Caco-2 (cell line): ENCODE measurements at regions of chr20 and their contacts with region 1.

Region 1: DNA sequence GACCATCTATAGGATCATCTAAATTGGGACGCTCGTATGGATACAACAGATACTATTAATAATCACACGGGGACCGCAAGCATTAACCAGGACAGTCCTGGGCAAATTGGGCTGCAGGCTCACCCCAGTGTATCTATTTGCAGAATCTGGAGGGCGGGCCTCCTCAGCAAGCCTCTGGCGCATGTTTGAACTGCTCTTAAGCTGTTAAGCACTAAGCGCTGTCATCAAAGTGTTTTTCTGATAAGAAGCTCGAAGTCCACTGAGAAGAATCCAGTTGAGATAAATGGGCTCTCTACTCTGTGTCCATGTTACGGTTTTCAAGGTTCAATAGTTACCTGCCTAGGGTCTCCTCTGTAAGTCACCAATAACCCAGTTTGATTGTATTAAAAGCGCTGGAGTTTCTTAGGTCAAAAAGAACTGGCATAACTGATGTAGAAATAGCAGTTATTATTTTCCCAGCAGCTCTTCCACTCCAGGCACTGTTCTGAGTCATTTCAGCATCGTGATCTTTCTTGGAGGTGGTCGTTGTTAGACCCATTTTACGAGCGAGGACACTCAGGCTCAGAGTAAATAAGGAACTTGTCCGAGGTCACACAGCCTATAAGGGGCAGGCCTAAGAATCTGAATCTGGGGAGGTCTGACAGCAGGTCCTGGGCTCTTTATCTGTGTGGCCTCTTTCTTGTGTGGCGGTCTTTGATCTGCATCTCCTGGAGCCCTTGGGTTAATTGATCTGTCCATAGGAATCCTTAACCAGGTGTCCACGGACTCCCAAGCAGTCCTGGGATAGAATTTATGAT is 207.4 kb upstream of the ZNF217 start:
- DNase-seq: peak; percentile 97 to 99
- H3K4me3 ChIP-seq: peak overlapping the region; percentile 21
- H3K4me3 Mint-ChIP-seq: peak overlapping the region; percentile 74
- H3K27ac Mint-ChIP-seq: peak overlapping the region; percentile 95
- H3K4me1 ChIP-seq: peaks cover 54% of the 10 kb centered on the region
- H3K4me1 Mint-ChIP-seq: peaks cover 67% of the 10 kb centered on the region
- H3K27me3 ChIP-seq: no peaks in the 10 kb centered on the region
- H3K27me3 Mint-ChIP-seq: no peaks in the 10 kb centered on the region
- CTCF ChIP-seq: no peak

Region 2: GRCh38 chr20:53594068-53595017 is 206.7 kb before region 1 on chr20:
- CTCF ChIA-PET with region 1: interaction called, 4 read pairs
- POLR2A ChIA-PET with region 1: interaction called, 4 read pairs
- intact Hi-C with region 1: loop called (anchors 1 kb)
- DNase-seq: peak; percentile 99 to 100
- H3K4me3 ChIP-seq: peak overlapping the region; percentile 98
- H3K4me3 Mint-ChIP-seq: peak overlapping the region; percentile 87
- H3K27ac Mint-ChIP-seq: peak overlapping the region; percentile 80
- H3K4me1 ChIP-seq: peaks cover 38% of the 10 kb centered on the region
- H3K4me1 Mint-ChIP-seq: peaks cover 44% of the 10 kb centered on the region
- H3K27me3 ChIP-seq: no peaks in the 10 kb centered on the region
- H3K27me3 Mint-ChIP-seq: no peaks in the 10 kb centered on the region
- CTCF ChIP-seq: peak; percentile 64 to 79

Region 3: DNA sequence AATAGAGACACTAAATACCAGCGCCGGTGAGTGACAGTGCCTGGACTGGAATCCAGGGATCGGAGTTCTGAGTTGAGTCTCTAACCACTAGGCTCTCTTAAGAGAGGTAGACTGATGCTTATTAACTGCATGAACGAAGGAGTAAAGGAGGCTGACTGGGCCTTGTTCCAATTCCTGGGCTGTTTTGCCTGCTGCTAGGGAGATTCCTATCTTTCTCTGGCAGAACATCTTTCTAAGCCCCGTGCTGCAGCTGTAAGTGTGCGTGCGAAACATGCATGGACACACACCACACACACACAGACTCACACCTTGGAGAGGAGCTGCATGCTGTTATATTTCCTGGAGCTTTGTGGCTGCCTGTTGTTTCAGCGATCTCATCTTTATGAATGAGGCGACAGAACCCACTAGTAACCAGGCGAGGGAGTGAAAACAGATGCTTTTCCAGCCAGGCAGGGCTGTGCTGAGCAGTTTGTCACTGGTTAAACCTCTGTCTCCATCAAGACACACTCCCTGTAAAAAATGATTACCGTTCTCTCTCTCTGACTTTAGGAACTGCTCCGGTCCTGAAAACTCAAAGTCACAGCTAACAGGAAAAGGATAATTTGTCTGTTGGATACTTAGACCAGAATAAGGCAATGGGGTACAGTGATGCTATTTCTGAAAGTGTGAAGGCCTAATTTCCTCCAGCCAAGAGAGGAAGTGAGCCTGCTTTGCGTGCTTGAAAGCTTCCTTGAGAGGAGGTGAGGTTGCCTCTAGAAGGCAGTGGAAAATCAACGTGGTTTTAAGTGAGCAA is 50.0 kb before region 1 on chr20:
- CTCF ChIA-PET with region 1: no interaction called
- POLR2A ChIA-PET with region 1: no interaction called
- intact Hi-C with region 1: no loop called
- DNase-seq: no peak
- H3K4me3 ChIP-seq: no peak overlapping the region
- H3K4me3 Mint-ChIP-seq: no peak overlapping the region
- H3K27ac Mint-ChIP-seq: peak overlapping the region; percentile 91
- H3K4me1 ChIP-seq: peaks cover 67% of the 10 kb centered on the region
- H3K4me1 Mint-ChIP-seq: peaks cover 65% of the 10 kb centered on the region
- H3K27me3 ChIP-seq: no peaks in the 10 kb centered on the region
- H3K27me3 Mint-ChIP-seq: no peaks in the 10 kb centered on the region
- CTCF ChIP-seq: no peak

Region 4: GRCh38 chr20:53773792-53774401 is 27.1 kb before region 1 on chr20:
- CTCF ChIA-PET with region 1: interaction called, 5 read pairs
- POLR2A ChIA-PET with region 1: interaction called, 10 read pairs
- intact Hi-C with region 1: loop called (anchors 1 kb)
- DNase-seq: peak; percentile 29 to 52
- H3K4me3 ChIP-seq: no peak overlapping the region
- H3K4me3 Mint-ChIP-seq: peak overlapping the region; percentile 22
- H3K27ac Mint-ChIP-seq: peak overlapping the region; percentile 66
- H3K4me1 ChIP-seq: peaks cover 60% of the 10 kb centered on the region
- H3K4me1 Mint-ChIP-seq: peaks cover 64% of the 10 kb centered on the region
- H3K27me3 ChIP-seq: no peaks in the 10 kb centered on the region
- H3K27me3 Mint-ChIP-seq: no peaks in the 10 kb centered on the region
- CTCF ChIP-seq: no peak

Region 5: DNA sequence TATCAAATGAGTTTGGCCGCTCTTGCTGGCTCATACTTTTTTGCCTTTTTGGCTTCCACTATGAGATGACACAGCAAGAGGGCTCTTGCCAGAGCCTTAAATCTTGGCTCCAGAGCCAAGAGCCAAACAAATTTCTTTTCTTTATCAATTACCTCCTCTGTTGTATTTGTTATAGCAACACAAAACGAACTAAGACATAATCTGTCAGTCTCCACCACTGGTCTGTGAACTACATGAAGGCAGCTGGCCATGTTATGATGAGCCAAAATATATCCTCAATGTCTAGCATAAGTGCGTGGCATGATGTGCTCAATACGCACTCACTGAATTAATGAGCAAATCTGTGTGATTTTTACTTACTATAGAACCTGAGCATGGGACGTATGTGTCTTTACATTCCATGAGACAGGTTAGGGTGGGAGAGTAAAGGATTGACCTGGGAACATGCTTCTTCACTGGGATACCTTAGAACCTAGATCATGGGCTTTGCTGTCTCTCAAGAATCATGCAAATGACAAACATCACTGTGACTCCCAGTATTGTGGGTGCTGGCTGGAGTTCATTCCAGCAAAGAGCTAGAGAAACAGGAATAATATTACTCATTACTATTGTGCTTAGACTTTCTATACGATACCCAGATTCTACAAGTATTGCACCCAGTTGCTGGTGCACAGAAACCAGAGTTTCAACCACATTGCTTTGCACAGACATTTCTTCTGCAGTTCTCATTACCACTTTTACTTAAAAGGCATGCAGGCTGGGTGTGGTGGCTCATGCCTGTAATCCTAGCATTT is 12.8 kb after region 1 on chr20:
- CTCF ChIA-PET with region 1: no interaction called
- POLR2A ChIA-PET with region 1: no interaction called
- intact Hi-C with region 1: no loop called
- DNase-seq: no peak
- H3K4me3 ChIP-seq: no peak overlapping the region
- H3K4me3 Mint-ChIP-seq: no peak overlapping the region
- H3K27ac Mint-ChIP-seq: peak overlapping the region; percentile 15
- H3K4me1 ChIP-seq: peaks cover 4% of the 10 kb centered on the region; the same call in 1 of the 2 replicates
- H3K4me1 Mint-ChIP-seq: peaks cover 6% of the 10 kb centered on the region
- H3K27me3 ChIP-seq: no peaks in the 10 kb centered on the region
- H3K27me3 Mint-ChIP-seq: no peaks in the 10 kb centered on the region
- CTCF ChIP-seq: no peak

Region 6: GRCh38 chr20:53828682-53829254 is 27.8 kb after region 1 on chr20:
- CTCF ChIA-PET with region 1: no interaction called
- POLR2A ChIA-PET with region 1: interaction called, 3 read pairs
- intact Hi-C with region 1: loop called (anchors 1 kb)
- DNase-seq: peak in 1 of 2 experiments; percentile 47
- H3K4me3 ChIP-seq: 0 out of 2 replicates have a peak overlapping the region, but pooled peaks have one; percentile 8
- H3K4me3 Mint-ChIP-seq: peak overlapping the region; percentile 65
- H3K27ac Mint-ChIP-seq: peak overlapping the region; percentile 81
- H3K4me1 ChIP-seq: peaks cover 35% of the 10 kb centered on the region
- H3K4me1 Mint-ChIP-seq: peaks cover 45% of the 10 kb centered on the region
- H3K27me3 ChIP-seq: no peaks in the 10 kb centered on the region
- H3K27me3 Mint-ChIP-seq: no peaks in the 10 kb centered on the region
- CTCF ChIP-seq: peak in 1 of 2 experiments; percentile 41

Region 7: DNA sequence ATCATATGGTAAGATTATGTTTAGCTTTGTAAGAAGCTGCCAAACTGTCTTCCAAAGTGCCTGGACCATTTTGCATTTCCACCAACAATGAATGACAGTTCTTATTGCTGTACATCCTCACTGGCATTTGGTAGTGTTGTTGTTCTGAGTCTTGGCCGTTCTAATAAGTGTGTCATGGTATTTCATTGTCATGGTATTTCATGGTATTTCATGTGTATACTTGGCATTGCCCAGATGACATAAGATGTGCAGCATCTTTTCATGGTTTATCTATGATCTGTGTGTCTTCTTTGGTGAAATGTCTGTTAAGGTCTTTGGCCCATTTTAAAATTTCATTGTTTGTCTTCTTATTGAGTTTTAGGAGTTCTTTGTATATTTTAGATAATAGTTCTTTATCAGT is 45.0 kb after region 1 on chr20:
- CTCF ChIA-PET with region 1: no interaction called
- POLR2A ChIA-PET with region 1: no interaction called
- intact Hi-C with region 1: loop called (anchors 1 kb)
- DNase-seq: no peak
- H3K4me3 ChIP-seq: no peak overlapping the region
- H3K4me3 Mint-ChIP-seq: no peak overlapping the region
- H3K27ac Mint-ChIP-seq: no peak overlapping the region
- H3K4me1 ChIP-seq: peaks cover 34% of the 10 kb centered on the region
- H3K4me1 Mint-ChIP-seq: peaks cover 39% of the 10 kb centered on the region
- H3K27me3 ChIP-seq: no peaks in the 10 kb centered on the region
- H3K27me3 Mint-ChIP-seq: no peaks in the 10 kb centered on the region
- CTCF ChIP-seq: no peak